HCT116 (cell line): ENCODE measurements at regions of chr1 and their contacts with region 1.

Region 1: DNA sequence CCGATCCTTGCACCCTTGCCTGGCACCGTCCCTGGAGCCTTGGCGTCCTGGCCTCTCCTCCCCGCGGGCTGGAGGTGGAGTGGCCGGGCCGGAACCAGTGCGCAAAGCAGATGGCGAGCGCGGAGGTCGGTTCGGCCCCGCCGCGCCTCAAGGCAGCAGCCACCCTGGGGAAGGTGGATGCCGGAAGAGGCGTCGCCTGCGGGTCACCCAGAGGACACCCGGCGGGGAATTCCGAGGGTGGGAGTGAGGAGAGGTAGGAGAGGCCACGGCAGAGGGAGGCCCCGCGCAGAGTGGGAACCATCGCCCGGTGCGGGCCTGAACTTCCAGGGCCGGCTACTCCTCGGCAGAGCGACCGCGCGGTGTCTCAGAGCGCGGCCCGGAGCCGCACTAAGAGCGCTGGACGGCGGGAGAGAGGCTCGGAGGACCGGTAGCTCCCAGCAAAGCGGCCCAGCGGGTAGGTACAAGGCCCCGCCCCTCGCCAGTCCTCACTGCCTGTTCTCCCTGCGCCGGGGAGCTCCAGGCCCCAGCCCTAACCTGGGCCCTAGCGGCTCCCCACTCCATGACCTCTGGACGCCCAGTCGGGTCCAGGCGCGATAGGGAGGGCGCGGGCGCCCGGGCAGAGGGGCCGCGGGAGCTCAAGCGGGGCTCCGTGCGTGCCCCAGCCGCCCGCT is at the start of gene RNF207:
- DNase-seq: peak; percentile 58
- ATAC-seq: peak; percentile 76
- H3K4me3 ChIP-seq: peak within 1 kb of the TSS; percentile 82 to 96
- H3K27ac ChIP-seq: peak within 1 kb of the TSS; percentile 99
- H3K4me1 ChIP-seq: peaks cover 7 to 27% of the 10 kb centered on the region in 2 experiments
- H3K27me3 ChIP-seq: no peaks in the 10 kb centered on the region
- CTCF ChIP-seq: no peak
- POLR2A ChIP-seq: peak; percentile 67
- RAD21 ChIP-seq: no peak
- total RNA-seq, gene RNF207: 61.2 TPM

Region 2: DNA sequence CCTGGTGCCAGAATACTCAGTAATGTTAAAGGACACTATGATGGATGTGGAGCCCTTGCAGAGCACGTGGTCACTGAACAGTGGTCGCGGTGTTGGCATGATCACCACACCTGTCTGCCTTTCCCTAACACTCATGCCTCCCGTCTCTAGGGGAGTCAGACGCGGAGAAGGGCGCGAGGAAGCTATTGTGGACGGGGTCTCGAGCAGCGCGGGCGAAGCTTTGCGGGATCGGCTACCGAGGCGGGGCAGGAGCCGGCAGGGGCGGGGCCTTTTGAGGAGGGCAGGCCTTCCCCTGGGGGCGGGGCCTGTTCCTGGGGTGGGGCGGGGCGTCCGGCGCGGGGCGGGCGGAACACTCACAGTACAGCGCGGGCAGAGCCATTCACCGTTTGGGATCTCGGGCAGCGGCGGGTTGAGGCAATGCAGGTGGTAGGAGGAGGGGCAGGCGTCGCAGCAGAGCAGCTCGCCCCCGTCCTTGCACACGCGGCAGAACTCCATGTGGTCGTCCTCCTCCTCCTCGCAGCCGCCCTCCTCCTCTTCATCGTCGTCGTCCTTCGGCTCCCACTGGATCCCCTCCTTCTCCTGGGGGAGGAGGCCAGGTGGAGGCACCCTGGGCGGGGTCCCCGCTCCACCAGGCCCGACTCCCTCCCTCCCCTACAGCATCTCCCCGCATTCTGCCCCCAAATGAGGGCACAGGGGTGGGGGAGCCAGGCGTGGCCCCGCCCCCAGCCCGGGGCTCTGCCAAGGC is 57.3 kb before region 1 on chr1:
- CTCF ChIA-PET with region 1: no interaction called
- POLR2A ChIA-PET with region 1: no interaction called
- RAD21 ChIA-PET with region 1: no interaction called
- intact Hi-C with region 1: no loop called
- DNase-seq: peak; percentile 48
- ATAC-seq: peak; percentile 97
- H3K4me3 ChIP-seq: peak overlapping the region in 1 of 2 experiments; percentile 41; a peak in 2 of 4 replicates
- H3K27ac ChIP-seq: peak overlapping the region; percentile 22; the same call in 1 of the 2 replicates
- H3K4me1 ChIP-seq: peaks cover 5 to 19% of the 10 kb centered on the region in 2 experiments; a peak in 3 of 4 replicates
- H3K27me3 ChIP-seq: no peaks in the 10 kb centered on the region
- CTCF ChIP-seq: no peak
- POLR2A ChIP-seq: peak; percentile 30
- RAD21 ChIP-seq: no peak

Region 3: DNA sequence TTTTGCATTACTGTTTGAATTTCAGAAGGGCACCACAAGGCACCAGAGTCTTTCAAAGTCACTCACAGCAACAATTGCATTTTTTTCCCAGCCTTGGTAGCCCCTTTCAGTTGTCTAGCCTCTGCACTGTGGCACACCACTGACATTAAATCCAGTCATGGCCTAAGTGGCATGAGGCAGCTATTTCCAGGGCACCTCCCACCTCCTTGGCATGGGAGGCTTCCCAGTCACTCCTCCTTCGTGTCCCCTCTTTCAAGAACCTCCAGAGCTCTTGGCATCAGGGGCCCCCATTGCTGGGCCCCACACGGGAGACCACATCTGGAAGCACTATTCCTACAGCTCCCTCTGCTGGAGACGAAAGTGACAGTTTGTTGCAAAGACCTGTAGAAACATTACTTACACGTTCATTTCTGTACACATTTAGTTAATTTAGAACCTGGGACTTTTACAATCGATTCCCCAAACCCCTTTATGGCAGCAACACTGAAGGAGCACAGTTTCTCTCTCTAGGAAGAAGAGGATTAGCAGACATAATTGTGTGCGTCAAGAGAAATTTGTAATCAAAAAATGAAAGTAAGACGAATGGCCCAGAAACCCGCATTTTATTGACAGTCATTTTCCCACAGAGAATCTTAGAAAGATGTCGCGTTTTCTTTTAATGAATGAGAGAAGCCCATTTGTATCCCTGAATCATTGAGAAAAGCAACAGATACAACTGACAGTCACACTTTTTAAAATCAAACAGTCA is 20.2 kb before region 1 on chr1:
- CTCF ChIA-PET with region 1: interaction called, 19 read pairs
- POLR2A ChIA-PET with region 1: interaction called, 3 read pairs
- RAD21 ChIA-PET with region 1: no interaction called
- intact Hi-C with region 1: no loop called
- DNase-seq: no peak
- ATAC-seq: peak; percentile 33; the same call in 1 of the 2 replicates
- H3K4me3 ChIP-seq: no peak overlapping the region
- H3K27ac ChIP-seq: no peak overlapping the region
- H3K4me1 ChIP-seq: peaks cover 7 to 15% of the 10 kb centered on the region in 2 experiments
- H3K27me3 ChIP-seq: no peaks in the 10 kb centered on the region
- CTCF ChIP-seq: peak; percentile 61 to 70 (median 68); a peak in 5 of 6 replicates
- POLR2A ChIP-seq: no peak
- RAD21 ChIP-seq: peak; percentile 67

Region 4: DNA sequence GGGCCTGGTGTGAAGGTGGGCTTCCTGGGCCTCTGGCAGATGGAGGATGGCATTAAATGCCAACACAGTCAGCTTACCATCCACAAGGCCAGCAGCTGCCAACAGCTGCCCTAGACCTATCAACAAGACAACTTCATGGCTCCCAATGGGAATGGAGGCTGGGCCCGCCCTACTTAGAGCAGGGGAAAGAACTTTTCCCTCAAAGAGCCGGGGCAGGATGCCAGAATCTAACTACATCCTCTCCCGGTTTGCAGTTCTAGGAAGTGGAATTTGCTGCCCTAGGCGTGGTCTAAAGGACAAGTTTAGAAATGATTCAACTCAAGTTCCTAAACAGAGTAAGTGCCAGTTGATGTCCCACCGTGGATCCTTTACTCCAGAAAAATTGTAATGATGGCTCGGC is 16.7 kb after region 1 on chr1:
- CTCF ChIA-PET with region 1: interaction called, 44 read pairs
- POLR2A ChIA-PET with region 1: interaction called, 11 read pairs
- RAD21 ChIA-PET with region 1: no interaction called
- intact Hi-C with region 1: no loop called
- DNase-seq: no peak
- ATAC-seq: no peak
- H3K4me3 ChIP-seq: no peak overlapping the region
- H3K27ac ChIP-seq: peak overlapping the region; percentile 55
- H3K4me1 ChIP-seq: peaks cover 80 to 93% of the 10 kb centered on the region in 2 experiments
- H3K27me3 ChIP-seq: no peaks in the 10 kb centered on the region
- CTCF ChIP-seq: no peak
- POLR2A ChIP-seq: no peak
- RAD21 ChIP-seq: no peak

Region 5: GRCh38 chr1:6235296-6235677 is 29.3 kb after region 1 on chr1:
- CTCF ChIA-PET with region 1: interaction called, 22 read pairs
- POLR2A ChIA-PET with region 1: interaction called, 7 read pairs
- RAD21 ChIA-PET with region 1: no interaction called
- intact Hi-C with region 1: loop called (anchors 1 kb)
- DNase-seq: no peak
- ATAC-seq: peak; percentile 28
- H3K4me3 ChIP-seq: peak overlapping the region; percentile 86 to 87
- H3K27ac ChIP-seq: peak overlapping the region; percentile 67
- H3K4me1 ChIP-seq: peaks cover 13 to 41% of the 10 kb centered on the region in 2 experiments
- H3K27me3 ChIP-seq: no peaks in the 10 kb centered on the region
- CTCF ChIP-seq: no peak
- POLR2A ChIP-seq: no peak
- RAD21 ChIP-seq: no peak